HEK293 (cell line): ENCODE measurements at regions of chr1 and their contacts with region 1.

Region 1: DNA sequence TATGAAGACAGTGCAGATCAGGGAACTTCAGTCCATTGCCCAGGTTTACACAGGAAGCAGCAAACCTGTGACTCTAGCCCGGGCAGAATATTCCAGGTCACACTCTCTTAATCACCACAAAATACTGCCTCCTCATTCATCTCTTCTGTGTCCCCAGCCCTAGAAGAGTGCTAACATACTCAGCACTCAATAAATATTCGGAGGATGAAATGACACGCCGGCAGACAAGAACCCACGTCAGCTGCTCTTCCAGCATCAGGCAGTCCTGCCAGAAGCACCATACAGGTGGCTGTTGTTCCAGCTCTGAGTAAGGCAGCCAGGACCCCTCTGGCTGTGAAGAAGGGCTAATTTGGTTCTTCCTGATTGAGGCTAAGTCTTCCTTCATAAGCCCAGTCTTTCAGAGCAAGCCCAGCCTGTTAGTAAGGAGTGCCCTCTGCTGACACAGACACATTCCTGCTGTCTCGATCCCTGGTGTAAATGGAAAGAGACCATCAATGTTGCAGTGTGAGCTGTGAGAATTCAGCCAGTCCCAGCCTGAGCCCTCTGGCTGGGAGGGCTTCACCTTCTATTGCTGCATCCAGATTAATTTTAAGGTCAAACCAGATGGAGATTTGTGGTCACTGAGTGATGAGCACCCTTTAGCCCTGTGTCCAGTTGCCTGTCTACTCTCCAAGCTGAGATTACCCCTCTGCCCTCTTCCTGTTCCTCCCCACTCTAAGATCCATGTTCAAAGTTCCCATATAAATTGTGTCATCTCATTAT is 45.0 kb upstream of the KIRREL1 start:
- H3K4me3 ChIP-seq: no peak overlapping the region
- H3K27ac ChIP-seq: no peak overlapping the region
- H3K4me1 ChIP-seq: no peaks in the 10 kb centered on the region
- CTCF ChIP-seq: peak; percentile 76

Region 2: DNA sequence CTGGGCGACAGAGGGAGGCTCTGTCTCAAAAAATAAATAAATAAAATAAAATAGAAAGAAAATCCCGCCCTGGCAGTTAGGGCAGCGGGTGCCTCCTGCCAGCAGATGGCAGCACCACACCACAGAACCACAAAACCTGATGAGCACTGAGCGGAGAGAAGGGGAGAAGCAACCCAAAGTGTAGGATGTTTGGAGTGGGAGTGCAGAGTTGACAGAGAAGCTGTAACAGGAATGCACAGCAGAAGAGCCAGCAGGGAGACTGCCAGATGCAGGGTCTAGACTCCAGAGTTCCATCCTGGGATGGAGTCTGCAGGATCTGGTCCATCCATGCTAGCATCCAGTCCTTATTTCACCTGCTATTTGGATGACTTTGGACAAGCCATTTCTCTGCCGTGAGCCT is 15.2 kb after region 1 on chr1:
- CTCF ChIA-PET with region 1: interaction called, 15 read pairs
- POLR2A ChIA-PET with region 1: no interaction called
- H3K4me3 ChIP-seq: no peak overlapping the region
- H3K27ac ChIP-seq: no peak overlapping the region
- H3K4me1 ChIP-seq: no peaks in the 10 kb centered on the region
- CTCF ChIP-seq: peak; percentile 84

Region 3: DNA sequence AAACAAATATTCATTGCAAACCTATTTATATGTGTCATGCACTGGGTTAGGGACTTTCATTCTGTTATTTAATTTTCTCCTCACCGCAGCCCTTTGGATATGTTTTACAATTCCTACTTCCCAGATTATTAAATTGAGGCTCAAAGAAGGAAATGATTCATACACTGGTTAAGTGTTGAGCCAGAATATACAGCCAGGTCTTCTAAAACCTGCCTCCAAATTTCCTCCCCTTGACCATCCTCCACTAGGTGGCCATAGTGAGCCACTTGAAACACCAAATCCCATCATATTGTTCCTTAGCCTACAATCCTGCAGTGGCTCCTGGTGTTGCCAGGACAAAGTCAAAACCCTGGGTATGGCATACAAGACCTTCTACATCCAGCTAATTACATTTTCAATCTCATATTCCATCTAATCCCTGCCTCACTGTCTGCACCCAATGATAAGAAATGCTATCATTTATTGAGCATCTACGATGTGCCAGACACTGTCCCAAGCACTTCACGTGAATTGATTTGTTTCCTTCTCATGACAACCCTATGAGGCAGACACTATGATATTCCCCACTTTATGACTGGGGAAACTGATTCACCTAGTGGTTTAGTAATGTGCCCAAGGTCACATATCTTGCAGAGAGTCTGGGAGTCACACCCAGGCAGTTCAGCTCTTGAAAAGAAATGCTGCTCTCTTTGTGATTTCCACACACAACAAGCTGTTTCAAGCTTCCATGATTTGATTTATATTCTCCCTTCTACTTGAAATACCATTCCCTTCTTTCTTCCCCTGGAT is 21.4 kb after region 1 on chr1:
- CTCF ChIA-PET with region 1: interaction called, 12 read pairs
- POLR2A ChIA-PET with region 1: no interaction called
- H3K4me3 ChIP-seq: no peak overlapping the region
- H3K27ac ChIP-seq: no peak overlapping the region
- H3K4me1 ChIP-seq: no peaks in the 10 kb centered on the region
- CTCF ChIP-seq: peak; percentile 61